ENCODE measurements at regions of chr12 and their contacts with region 1.

Region 1: DNA sequence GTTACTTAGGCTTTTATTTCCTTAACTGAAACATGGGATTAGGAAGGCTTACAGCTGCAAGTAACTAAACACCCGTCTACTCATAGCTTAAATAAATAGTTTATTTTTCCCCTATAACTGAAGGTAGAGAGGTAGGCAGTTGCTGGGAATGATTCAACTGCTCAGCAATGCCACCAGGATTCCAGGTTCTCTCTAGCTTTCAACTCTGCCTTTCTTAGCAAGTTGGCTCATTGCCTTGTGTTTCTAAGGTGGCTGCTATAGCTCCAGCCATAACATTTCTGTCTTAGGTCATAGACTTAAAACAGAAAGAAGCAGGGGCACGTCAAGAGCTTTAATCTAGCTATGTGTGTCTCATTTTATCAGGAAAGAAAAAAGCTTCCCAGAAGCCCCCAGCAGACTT is 103.7 kb upstream of the MDM1 start:
- DNase-seq: peak; percentile 97
- ATAC-seq: peak; percentile 85
- H3K4me3 ChIP-seq: peak overlapping the region; percentile 16; the same call in 1 of the 2 replicates
- H3K27ac ChIP-seq: peak overlapping the region; percentile 84
- H3K4me1 ChIP-seq: peaks cover 46% of the 10 kb centered on the region
- H3K27me3 ChIP-seq: no peaks in the 10 kb centered on the region
- CTCF ChIP-seq: no peak

Region 2: DNA sequence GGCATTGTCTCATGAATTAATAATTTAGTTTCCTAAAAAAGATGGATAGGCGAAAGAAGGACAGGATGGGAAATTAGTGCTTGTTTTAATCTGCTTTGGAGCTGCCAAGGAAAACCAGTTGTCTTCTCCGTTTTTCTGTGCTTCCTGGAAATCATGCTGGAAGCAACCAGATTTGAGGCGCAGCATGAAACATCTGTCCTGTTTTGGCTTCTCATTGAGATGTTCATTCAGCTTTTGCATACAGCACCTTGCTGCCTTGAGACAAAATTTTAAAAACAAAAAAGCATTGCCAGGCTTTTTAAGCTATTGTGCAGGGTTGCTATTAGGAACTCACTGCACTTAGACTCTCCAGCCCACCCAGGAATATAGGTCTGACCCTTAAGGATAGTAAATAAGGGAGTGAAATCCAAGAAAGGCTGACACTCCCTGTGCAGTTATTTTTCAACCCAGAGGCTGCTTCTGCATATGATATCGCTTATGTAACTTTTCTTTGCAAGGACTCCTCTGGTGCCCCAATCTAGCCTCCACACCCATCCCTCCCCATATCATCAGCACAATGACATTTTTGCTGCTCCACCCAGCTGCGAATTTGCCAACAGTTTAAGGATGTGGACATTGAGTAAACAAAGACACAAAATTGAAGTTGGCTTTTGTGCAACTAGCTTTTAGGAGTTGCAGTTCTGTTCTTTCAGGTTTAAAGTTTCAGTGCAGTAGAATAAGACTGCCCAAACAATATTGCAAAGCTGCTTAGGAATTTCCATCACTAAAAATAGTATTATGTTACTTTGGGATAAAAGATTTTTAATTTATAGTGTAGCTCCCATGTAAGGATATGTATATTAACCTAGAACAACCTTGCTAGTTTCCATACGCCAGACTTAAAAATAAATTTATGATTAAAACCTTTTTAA is 56.7 kb before region 1 on chr12:
- CTCF ChIA-PET with region 1: no interaction called
- POLR2A ChIA-PET with region 1: no interaction called
- intact Hi-C with region 1: loop called (anchors 5 kb)
- DNase-seq: peak; percentile 82
- ATAC-seq: peak; percentile 89
- H3K4me3 ChIP-seq: no peak overlapping the region
- H3K27ac ChIP-seq: peak overlapping the region; percentile 21; the same call in 1 of the 2 replicates
- H3K4me1 ChIP-seq: peaks cover 26% of the 10 kb centered on the region
- H3K27me3 ChIP-seq: no peaks in the 10 kb centered on the region
- CTCF ChIP-seq: no peak

Region 3: GRCh38 chr12:68521321-68521839 is 85.6 kb after region 1 on chr12:
- CTCF ChIA-PET with region 1: no interaction called
- POLR2A ChIA-PET with region 1: no interaction called
- intact Hi-C with region 1: loop called (anchors 1 kb)
- DNase-seq: peak; percentile 67
- ATAC-seq: peak; percentile 94
- H3K4me3 ChIP-seq: peak overlapping the region; percentile 56
- H3K27ac ChIP-seq: peak overlapping the region; percentile 57
- H3K4me1 ChIP-seq: peaks cover 13% of the 10 kb centered on the region
- H3K27me3 ChIP-seq: no peaks in the 10 kb centered on the region
- CTCF ChIP-seq: no peak

Region 4: DNA sequence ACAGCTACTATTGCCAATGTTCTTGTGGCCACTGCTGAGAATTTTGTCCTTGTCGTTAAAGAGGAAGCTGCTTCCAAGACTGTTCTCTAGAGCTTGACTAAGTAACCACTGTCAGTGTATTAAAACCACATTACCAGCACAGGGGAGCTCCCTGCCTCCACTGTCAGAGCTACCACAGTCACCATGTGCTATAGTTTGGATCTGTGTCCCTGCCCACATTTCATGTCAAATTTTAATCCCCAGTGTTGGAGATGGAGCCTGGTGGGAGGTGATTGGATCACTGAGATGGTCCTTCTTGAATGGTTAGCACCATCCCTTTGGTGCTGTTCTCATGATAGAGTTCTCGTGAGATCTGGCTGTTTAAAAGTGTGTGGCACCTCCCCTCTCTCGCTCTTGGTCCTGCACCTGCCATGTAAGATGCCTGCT is 151.6 kb after region 1 on chr12:
- CTCF ChIA-PET with region 1: no interaction called
- POLR2A ChIA-PET with region 1: no interaction called
- intact Hi-C with region 1: loop called (anchors 2 kb)
- DNase-seq: no peak
- ATAC-seq: no peak
- H3K4me3 ChIP-seq: no peak overlapping the region
- H3K27ac ChIP-seq: no peak overlapping the region
- H3K4me1 ChIP-seq: peaks cover 18% of the 10 kb centered on the region
- H3K27me3 ChIP-seq: no peaks in the 10 kb centered on the region
- CTCF ChIP-seq: no peak

Measured in PC-3 (cell line).